T-cell (primary cell): ENCODE measurements at regions of chr6 and their contacts with region 1.

Region 1: GRCh38 chr6:130037207-130037811 is 18.9 kb downstream of the L3MBTL3 start:
- DNase-seq: peak in 1 of 35 experiments; percentile 59
- ATAC-seq: peak in 2 of 4 experiments; percentile 43 to 52
- H3K4me3 ChIP-seq: no peak overlapping the region
- H3K4me3 Mint-ChIP-seq: no peak overlapping the region
- H3K27ac ChIP-seq: no peak overlapping the region
- H3K27ac Mint-ChIP-seq: no peak overlapping the region
- H3K4me1 ChIP-seq: peaks cover 0 to 8% of the 10 kb centered on the region in 2 experiments
- H3K4me1 Mint-ChIP-seq: peaks cover 71 to 78% (median 73%) of the 10 kb centered on the region in 3 donors
- H3K27me3 ChIP-seq: no peaks in the 10 kb centered on the region
- H3K27me3 Mint-ChIP-seq: no peaks in the 10 kb centered on the region

Region 2: GRCh38 chr6:130134582-130134981 is 97.3 kb after region 1 on chr6:
- CTCF ChIA-PET with region 1: interaction called in 1 of 2 experiments, 10 read pairs
- POLR2A ChIA-PET with region 1: no interaction called
- DNase-seq: peak in 1 of 35 experiments; percentile 43
- ATAC-seq: no peak
- H3K4me3 ChIP-seq: no peak overlapping the region
- H3K4me3 Mint-ChIP-seq: peak overlapping the region in 1 of 3 donors; percentile 64
- H3K27ac ChIP-seq: peak overlapping the region; percentile 91
- H3K27ac Mint-ChIP-seq: peak overlapping the region; percentile 91 to 95
- H3K4me1 ChIP-seq: peaks cover 47 to 50% of the 10 kb centered on the region in 2 experiments
- H3K4me1 Mint-ChIP-seq: peaks cover 92 to 99% (median 94%) of the 10 kb centered on the region in 3 donors
- H3K27me3 ChIP-seq: no peaks in the 10 kb centered on the region
- H3K27me3 Mint-ChIP-seq: no peaks in the 10 kb centered on the region